ENCODE measurements at regions of chr12 and their contacts with region 1.

Region 1: GRCh38 chr12:92158796-92159439 is 13.3 kb upstream of the BTG1 start:
- DNase-seq: no peak
- H3K4me3 ChIP-seq: no peak overlapping the region
- H3K27ac ChIP-seq: peak overlapping the region in 1 of 2 donors; percentile 36
- H3K4me1 ChIP-seq: peaks cover 4% of the 10 kb centered on the region
- H3K27me3 ChIP-seq: no peaks in the 10 kb centered on the region
- CTCF ChIP-seq: no peak
- EP300 ChIP-seq: no peak
- POLR2A ChIP-seq: no peak

Region 2: DNA sequence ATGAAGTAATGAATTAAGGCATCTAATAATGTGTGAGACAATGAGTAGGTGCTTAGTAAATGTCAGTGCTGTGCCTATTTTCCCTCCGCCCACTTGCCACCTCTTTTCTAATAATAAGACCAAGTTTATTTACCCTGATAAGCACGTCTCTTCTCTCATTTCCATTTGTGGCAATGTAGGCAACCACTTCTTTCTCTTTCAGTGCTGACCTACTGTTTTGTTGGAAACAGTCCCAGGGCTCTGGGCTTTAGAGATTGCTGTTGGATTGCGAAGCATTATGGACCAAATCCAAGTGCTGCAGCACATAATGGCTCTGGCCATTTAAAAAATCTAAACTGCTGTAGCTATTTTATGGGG is 402.6 kb after region 1 on chr12:
- intact Hi-C with region 1: loop called in 1 of 4 experiments (anchors 10 kb)
- DNase-seq: peak in 2 of 5 donors; percentile 27 to 39
- H3K4me3 ChIP-seq: no peak overlapping the region
- H3K27ac ChIP-seq: peak overlapping the region in 1 of 2 donors; percentile 16
- H3K4me1 ChIP-seq: peaks cover 3% of the 10 kb centered on the region
- H3K27me3 ChIP-seq: no peaks in the 10 kb centered on the region
- CTCF ChIP-seq: no peak
- EP300 ChIP-seq: no peak
- POLR2A ChIP-seq: no peak